ENCODE measurements at regions of chr9 and their contacts with region 1.

Region 1: DNA sequence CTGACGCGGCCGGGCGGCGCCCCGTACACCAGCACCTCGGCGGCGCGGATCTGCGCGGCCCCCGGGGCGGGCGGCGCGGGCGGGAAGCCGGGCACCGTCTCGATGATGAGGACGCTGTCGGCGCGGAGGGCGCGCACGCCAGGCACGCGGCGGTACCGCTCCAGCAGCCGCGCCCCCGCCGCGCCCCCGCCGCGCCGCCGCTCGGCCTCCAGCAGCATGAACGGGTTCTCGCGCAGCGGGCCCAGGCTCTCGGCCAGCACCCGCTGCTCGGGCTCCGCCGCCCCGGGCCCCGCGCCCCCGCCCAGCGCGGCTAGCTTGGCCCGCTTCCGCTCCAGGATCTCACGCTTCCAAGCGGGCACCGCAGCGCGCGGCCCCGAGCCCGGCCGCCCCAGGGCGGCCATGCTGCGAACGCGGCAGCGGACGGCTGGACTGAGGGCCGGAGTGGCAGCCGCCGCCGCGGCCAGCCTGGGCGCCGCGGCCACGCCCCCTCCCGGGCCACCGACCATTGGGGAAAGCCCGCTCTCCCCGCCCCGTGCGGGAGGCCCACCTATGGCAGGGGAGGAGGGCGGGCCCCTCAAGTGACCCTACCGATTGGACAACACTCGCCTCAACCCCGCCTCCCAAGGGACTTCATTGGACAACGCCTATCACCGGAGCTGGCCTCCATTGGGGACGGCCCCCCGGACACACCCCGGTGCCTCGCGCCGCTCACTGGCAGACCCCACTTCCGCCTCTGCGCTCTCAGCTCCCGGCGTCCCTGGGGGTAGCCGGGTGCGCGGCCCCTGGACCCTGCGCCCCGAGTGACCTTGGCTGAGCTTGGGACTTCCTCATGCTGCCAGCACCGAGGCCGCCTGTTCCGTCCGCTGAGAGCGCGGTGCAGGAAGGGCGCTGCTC is at the start of gene TPRN:
- DNase-seq: peak; percentile 95
- ATAC-seq: peak; percentile 96
- H3K4me3 ChIP-seq: peak within 1 kb of the TSS; percentile 77
- H3K27ac ChIP-seq: peak within 1 kb of the TSS; percentile 62
- H3K4me1 ChIP-seq: peaks cover 32% of the 10 kb centered on the region
- H3K27me3 ChIP-seq: no peaks in the 10 kb centered on the region
- CTCF ChIP-seq: no peak
- EP300 ChIP-seq: no peak
- POLR2A ChIP-seq: peak; percentile 95
- RAD21 ChIP-seq: no peak
- polyA plus RNA-seq, gene TPRN: 0.18 to 0.75 TPM

Region 2: GRCh38 chr9:137041124-137041523 is 159.4 kb before region 1 on chr9:
- CTCF ChIA-PET with region 1: no interaction called
- POLR2A ChIA-PET with region 1: no interaction called
- RAD21 ChIA-PET with region 1: no interaction called
- SMC1A ChIA-PET with region 1: no interaction called
- in situ Hi-C with region 1: no loop called
- intact Hi-C with region 1: no loop called
- DNase-seq: no peak
- ATAC-seq: no peak
- H3K4me3 ChIP-seq: no peak overlapping the region
- H3K27ac ChIP-seq: no peak overlapping the region
- H3K4me1 ChIP-seq: no peaks in the 10 kb centered on the region
- H3K27me3 ChIP-seq: peaks cover 5 to 13% of the 10 kb centered on the region in 2 experiments; a peak in 3 of 4 replicates
- CTCF ChIP-seq: no peak
- EP300 ChIP-seq: no peak
- POLR2A ChIP-seq: no peak
- RAD21 ChIP-seq: no peak

Region 3: GRCh38 chr9:137123468-137123837 is 77.1 kb before region 1 on chr9:
- CTCF ChIA-PET with region 1: interaction called, 4 read pairs
- POLR2A ChIA-PET with region 1: interaction called, 6 read pairs
- RAD21 ChIA-PET with region 1: interaction called, 4 read pairs
- SMC1A ChIA-PET with region 1: no interaction called
- in situ Hi-C with region 1: no loop called
- intact Hi-C with region 1: loop called (anchors 2 kb)
- DNase-seq: peak; percentile 91
- ATAC-seq: peak; percentile 30
- H3K4me3 ChIP-seq: 0 out of 2 replicates have a peak overlapping the region, but pooled peaks have one; percentile 3
- H3K27ac ChIP-seq: peak overlapping the region; percentile 47
- H3K4me1 ChIP-seq: peaks cover 42% of the 10 kb centered on the region
- H3K27me3 ChIP-seq: no peaks in the 10 kb centered on the region
- CTCF ChIP-seq: no peak
- EP300 ChIP-seq: no peak
- POLR2A ChIP-seq: no peak
- RAD21 ChIP-seq: no peak

Region 4: DNA sequence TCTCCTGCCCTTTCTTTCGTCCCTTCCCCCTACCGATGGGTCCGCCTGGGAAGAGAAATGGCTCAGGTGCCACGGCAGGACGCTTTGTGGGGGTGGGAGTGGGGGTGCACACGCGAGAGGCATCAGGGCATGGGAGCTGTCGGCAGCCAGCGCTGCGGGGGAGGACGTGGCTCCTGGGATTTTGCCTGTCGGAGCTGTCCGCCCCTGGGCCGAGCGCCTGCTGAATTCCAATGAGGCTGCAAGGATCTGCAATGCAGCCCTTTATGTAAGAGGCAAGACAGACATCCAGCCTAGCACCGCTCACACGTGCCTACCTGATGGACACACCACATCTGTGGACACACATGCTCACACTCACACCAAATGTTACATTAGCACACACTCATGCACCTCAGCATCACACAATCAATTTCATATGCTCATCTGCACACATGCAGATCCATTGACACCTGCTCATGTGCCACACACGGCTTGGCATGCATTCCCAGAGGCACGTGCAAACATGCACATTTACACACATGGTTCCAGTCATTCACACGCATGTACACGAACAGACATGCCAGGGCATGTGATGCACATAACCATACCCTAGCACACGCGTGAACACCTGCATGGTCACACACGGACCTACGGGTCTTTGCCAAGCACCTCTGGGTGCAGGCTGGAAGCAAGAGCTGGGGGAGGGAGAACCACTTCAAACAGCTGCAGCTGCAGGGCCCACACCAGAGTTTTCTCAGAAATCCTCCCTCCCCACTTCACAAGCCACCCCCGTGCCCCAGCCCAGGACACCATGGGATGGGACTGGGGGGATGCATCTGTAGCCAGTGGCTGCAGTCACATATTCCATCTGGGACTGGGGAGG is 60.2 kb before region 1 on chr9:
- CTCF ChIA-PET with region 1: no interaction called
- POLR2A ChIA-PET with region 1: no interaction called
- RAD21 ChIA-PET with region 1: no interaction called
- SMC1A ChIA-PET with region 1: no interaction called
- in situ Hi-C with region 1: no loop called
- intact Hi-C with region 1: no loop called
- DNase-seq: no peak
- ATAC-seq: no peak
- H3K4me3 ChIP-seq: no peak overlapping the region
- H3K27ac ChIP-seq: no peak overlapping the region
- H3K4me1 ChIP-seq: no peaks in the 10 kb centered on the region
- H3K27me3 ChIP-seq: peaks cover 10 to 14% of the 10 kb centered on the region in 2 experiments
- CTCF ChIP-seq: no peak
- EP300 ChIP-seq: no peak
- POLR2A ChIP-seq: no peak
- RAD21 ChIP-seq: no peak

Region 5: DNA sequence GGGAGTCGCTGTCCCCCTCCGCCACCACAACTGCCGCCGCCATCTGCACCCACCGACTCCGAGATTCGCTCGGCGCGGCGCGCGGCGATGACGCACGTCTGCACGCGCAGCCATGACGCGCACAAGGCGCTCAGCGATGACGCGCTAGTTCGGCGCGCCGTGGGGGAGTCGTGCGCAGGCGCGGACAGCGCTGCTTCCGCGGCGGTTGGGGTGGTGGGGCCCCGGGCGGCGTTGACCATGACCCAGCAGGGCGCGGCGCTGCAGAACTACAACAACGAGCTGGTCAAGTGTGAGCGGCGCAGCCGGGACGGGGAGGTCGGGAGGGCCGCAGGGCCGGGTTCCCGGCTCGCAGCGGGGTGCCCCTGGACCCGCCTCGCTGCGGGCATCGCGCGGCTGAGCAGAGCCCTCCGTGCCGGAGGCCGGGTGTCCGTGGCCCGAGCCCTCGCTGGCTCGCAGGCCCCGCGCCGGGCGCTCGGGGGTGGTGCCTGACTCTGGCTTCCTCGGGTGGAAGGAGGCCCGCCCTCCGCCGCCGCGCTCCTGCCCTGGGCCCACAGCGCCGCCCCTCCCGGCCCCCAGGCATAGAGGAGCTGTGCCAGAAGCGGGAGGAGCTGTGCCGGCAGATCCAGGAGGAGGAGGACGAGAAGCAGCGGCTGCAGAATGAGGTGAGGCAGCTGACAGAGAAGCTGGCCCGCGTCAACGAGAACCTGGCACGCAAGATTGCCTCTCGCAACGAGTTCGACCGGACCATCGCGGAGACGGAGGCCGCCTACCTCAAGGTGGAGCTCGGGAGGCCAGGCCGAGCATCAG is 11.9 kb before region 1 on chr9 and contains the starts of genes ANAPC2 and SSNA1:
- CTCF ChIA-PET with region 1: interaction called, 11 read pairs
- POLR2A ChIA-PET with region 1: interaction called, 10 read pairs
- RAD21 ChIA-PET with region 1: interaction called, 9 read pairs
- SMC1A ChIA-PET with region 1: interaction called, 9 read pairs
- in situ Hi-C with region 1: no loop called
- intact Hi-C with region 1: no loop called
- DNase-seq: peak; percentile 82
- ATAC-seq: peak; percentile 92
- H3K4me3 ChIP-seq: peak within 1 kb of the TSS; percentile 99
- H3K27ac ChIP-seq: peak within 1 kb of the TSS; percentile 77
- H3K4me1 ChIP-seq: peaks cover 22% of the 10 kb centered on the region
- H3K27me3 ChIP-seq: no peaks in the 10 kb centered on the region
- CTCF ChIP-seq: peak; percentile 41 to 58 (median 52)
- EP300 ChIP-seq: peak; percentile 14 to 49; a peak in 1 of 4 replicates
- POLR2A ChIP-seq: peak; percentile 95
- RAD21 ChIP-seq: peak; percentile 45
- polyA plus RNA-seq, gene ANAPC2: 0.03 to 0.04 TPM
- polyA plus RNA-seq, gene SSNA1: 0.63 to 13.4 TPM

Region 6: GRCh38 chr9:137247135-137247915 is 46.8 kb after region 1 on chr9:
- CTCF ChIA-PET with region 1: no interaction called
- POLR2A ChIA-PET with region 1: no interaction called
- RAD21 ChIA-PET with region 1: no interaction called
- SMC1A ChIA-PET with region 1: no interaction called
- in situ Hi-C with region 1: no loop called
- intact Hi-C with region 1: no loop called
- DNase-seq: no peak
- ATAC-seq: no peak
- H3K4me3 ChIP-seq: no peak overlapping the region
- H3K27ac ChIP-seq: no peak overlapping the region
- H3K4me1 ChIP-seq: peaks cover 20% of the 10 kb centered on the region
- H3K27me3 ChIP-seq: no peaks in the 10 kb centered on the region
- CTCF ChIP-seq: no peak
- EP300 ChIP-seq: no peak
- POLR2A ChIP-seq: no peak
- RAD21 ChIP-seq: no peak

Region 7: DNA sequence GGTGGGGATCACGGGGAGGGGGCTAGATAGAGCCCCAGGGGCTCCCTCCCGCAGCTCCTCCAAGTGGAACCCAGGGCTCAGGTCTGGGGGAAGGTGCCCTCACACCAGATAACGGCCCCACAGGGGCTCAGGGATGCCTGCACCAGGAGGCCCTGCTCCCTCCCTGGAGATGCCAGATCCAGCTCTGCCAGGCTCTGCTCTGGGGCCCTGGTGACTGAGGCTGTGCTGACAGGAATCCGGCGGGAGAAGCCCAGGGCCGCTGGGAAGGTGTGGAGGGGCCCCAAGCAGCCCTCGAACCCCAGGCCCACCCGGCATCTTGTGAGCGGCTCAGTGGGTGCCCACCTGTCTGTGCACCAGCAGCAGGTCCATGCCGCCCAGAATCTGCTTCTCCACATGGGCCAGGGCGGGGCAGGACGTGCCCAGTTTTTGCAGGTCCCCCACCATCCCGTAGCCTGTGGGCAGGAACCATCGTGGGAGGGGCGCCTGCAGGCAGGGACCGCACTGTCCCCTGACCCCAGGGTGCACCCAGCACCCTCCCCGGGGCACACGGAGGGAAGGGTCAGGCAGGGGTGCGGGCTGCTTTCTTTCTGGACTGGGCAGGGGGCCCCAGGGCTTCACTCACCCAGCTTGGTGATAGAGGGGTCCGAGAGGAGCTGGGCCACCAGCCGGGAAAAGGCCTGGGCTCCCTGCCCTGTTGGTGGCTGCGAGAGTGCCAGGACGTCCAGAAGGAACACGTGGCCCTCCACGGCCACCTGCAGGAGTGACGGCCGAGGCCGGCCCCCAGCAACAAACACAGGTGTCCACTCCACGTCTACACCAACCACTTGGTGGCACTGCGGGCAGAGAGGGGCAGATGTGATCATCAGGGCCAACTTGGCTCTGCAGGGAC is 150.4 kb after region 1 on chr9:
- CTCF ChIA-PET with region 1: no interaction called
- POLR2A ChIA-PET with region 1: no interaction called
- RAD21 ChIA-PET with region 1: no interaction called
- SMC1A ChIA-PET with region 1: no interaction called
- in situ Hi-C with region 1: no loop called
- intact Hi-C with region 1: no loop called
- DNase-seq: no peak
- ATAC-seq: no peak
- H3K4me3 ChIP-seq: no peak overlapping the region
- H3K27ac ChIP-seq: no peak overlapping the region
- H3K4me1 ChIP-seq: no peaks in the 10 kb centered on the region
- H3K27me3 ChIP-seq: no peaks in the 10 kb centered on the region
- CTCF ChIP-seq: no peak
- EP300 ChIP-seq: no peak
- POLR2A ChIP-seq: no peak
- RAD21 ChIP-seq: no peak

Measured in GM12878 (cell line).